Heart right ventricle (tissue), 16 donors: ENCODE measurements at regions of chr4 and their contacts with region 1.

Region 1: GRCh38 chr4:136784326-136784725 is 748.0 kb downstream of the PCDH18 start:
- DNase-seq: no peak
- ATAC-seq: no peak
- H3K4me3 ChIP-seq: no peak overlapping the region
- H3K27ac ChIP-seq: no peak overlapping the region
- H3K4me1 ChIP-seq: no peaks in the 10 kb centered on the region
- H3K27me3 ChIP-seq: no peaks in the 10 kb centered on the region
- CTCF ChIP-seq: no peak

Region 2: DNA sequence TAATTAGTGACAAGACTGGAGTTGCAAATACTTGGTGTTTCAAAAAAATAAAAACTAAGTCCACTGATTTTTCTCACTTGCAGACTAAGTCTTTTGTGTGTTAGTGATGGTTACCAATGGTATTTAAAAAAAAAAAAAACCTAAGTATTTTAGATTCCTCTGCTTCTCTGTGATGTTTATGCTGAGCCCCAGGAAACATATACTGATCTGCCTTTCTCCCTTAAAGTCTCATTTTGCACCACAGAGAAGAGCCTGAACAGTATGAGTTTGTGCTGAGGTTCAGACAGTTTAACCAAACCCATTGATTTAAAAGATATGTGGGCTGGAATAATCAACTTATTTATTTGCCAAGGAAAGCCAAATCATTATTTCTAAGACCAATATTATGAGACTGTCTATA is 557.0 kb before region 1 on chr4:
- intact Hi-C with region 1: no loop called
- DNase-seq: no peak
- ATAC-seq: no peak
- H3K4me3 ChIP-seq: no peak overlapping the region
- H3K27ac ChIP-seq: no peak overlapping the region
- H3K4me1 ChIP-seq: no peaks in the 10 kb centered on the region
- H3K27me3 ChIP-seq: no peaks in the 10 kb centered on the region
- CTCF ChIP-seq: no peak

Region 3: GRCh38 chr4:136763919-136764318 is 20.4 kb before region 1 on chr4:
- intact Hi-C with region 1: loop called in 1 of 10 experiments (anchors 2 kb)
- DNase-seq: no peak
- ATAC-seq: no peak
- H3K4me3 ChIP-seq: no peak overlapping the region
- H3K27ac ChIP-seq: no peak overlapping the region
- H3K4me1 ChIP-seq: no peaks in the 10 kb centered on the region
- H3K27me3 ChIP-seq: no peaks in the 10 kb centered on the region
- CTCF ChIP-seq: no peak